Gastrocnemius medialis (tissue), 4 donors: ENCODE measurements at regions of chr1 and their contacts with region 1.

Region 1: DNA sequence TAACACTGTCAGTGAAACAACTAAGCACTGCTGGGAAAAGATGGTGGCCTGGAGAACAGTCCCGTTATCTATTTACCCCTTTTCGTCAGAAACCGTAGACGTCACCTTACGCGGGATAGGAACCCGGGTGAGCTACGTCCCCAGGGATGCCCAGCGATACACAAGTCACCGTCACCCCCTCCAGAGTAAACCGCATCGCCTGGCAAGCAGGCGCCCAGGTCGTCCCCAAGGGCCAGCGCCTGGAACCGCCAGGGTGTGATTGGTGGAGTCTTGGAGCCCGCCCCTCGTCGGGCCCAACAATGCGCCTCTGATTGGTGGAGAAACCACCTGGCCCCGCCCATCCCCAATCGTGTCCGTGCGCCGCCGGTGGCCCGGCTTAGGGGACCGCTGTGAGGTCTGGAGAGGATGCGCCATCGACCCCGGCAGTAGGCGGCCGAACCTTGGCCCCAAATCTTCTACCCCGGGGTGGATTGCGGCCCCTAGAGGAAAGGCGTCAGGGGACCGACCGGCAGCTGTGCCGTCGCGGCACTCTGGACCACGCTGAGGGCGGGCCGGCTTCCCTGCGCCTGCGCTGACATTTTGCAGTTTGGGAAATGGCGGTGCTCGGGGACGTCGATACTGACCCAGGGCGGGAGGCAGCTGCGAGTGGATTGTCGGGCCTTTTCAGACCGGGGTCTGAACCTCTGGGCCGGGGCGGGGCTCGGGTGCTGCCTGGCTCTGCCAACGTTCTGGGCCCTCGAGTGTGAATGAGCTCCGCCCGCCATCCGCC is 34.4 kb downstream of the SLC2A1 start:
- DNase-seq: peak; percentile 76 to 84
- ATAC-seq: peak; percentile 92
- H3K4me3 ChIP-seq: peak overlapping the region; percentile 67 to 83 (median 76)
- H3K27ac ChIP-seq: peak overlapping the region; percentile 75 to 85 (median 77)
- H3K4me1 ChIP-seq: peaks cover 3 to 10% of the 10 kb centered on the region in 2 donors
- H3K27me3 ChIP-seq: peaks cover 4 to 17% (median 10%) of the 10 kb centered on the region in 3 donors
- CTCF ChIP-seq: peak in 1 of 5 experiments; percentile 9
- POLR2A ChIP-seq: peak; percentile 51 to 67

Region 2: DNA sequence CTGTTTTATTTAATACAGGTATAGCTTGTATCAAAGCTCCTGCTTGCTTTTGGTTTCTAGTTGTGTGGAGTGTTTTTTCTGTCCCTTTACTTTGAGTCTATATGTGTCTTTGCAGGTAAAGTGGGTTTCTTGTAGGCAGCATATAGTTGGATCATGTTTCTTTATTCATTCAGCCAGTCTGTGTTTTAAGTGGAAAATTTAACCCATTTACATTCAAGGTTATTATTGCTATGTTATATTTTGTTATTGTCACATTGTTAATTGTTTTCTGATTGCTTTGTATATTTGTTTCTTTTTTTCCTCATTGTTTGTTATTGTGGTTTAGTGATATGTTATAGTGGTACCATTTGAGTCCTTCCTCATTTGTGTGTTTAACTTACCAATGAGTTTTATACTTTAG is 211.0 kb before region 1 on chr1:
- in situ Hi-C with region 1: no loop called
- intact Hi-C with region 1: no loop called
- DNase-seq: no peak
- ATAC-seq: no peak
- H3K4me3 ChIP-seq: no peak overlapping the region
- H3K27ac ChIP-seq: no peak overlapping the region
- H3K4me1 ChIP-seq: no peaks in the 10 kb centered on the region
- H3K27me3 ChIP-seq: no peaks in the 10 kb centered on the region
- CTCF ChIP-seq: no peak
- POLR2A ChIP-seq: no peak

Region 3: GRCh38 chr1:42816585-42817434 is 107.5 kb before region 1 on chr1 and contains the starts of genes ERMAP and SVBP:
- in situ Hi-C with region 1: no loop called
- intact Hi-C with region 1: loop called (anchors 10 kb)
- DNase-seq: peak; percentile 84 to 87
- ATAC-seq: peak; percentile 97
- H3K4me3 ChIP-seq: peak within 1 kb of the TSS; percentile 65 to 95 (median 76)
- H3K27ac ChIP-seq: peak within 1 kb of the TSS; percentile 88 to 100 (median 96)
- H3K4me1 ChIP-seq: peaks cover 2 to 20% of the 10 kb centered on the region in 2 donors
- H3K27me3 ChIP-seq: no peaks in the 10 kb centered on the region
- CTCF ChIP-seq: no peak
- POLR2A ChIP-seq: no peak
- total RNA-seq, gene ERMAP: 1.4 to 6.5 (median 3.9) TPM
- total RNA-seq, gene SVBP: 15.5 to 26.4 (median 24.9) TPM

Region 4: GRCh38 chr1:42958488-42959319 is 34.4 kb after region 1 on chr1 and contains the start of gene SLC2A1:
- in situ Hi-C with region 1: no loop called
- intact Hi-C with region 1: loop called (anchors 2 kb)
- DNase-seq: peak; percentile 61
- ATAC-seq: peak; percentile 66 to 71
- H3K4me3 ChIP-seq: peak within 1 kb of the TSS; percentile 56 to 78 (median 63)
- H3K27ac ChIP-seq: peak within 1 kb of the TSS in 3 of 4 donors; percentile 31 to 55 (median 53)
- H3K4me1 ChIP-seq: peaks cover 5 to 9% of the 10 kb centered on the region in 2 donors
- H3K27me3 ChIP-seq: peaks cover 29 to 45% (median 35%) of the 10 kb centered on the region in 3 donors
- CTCF ChIP-seq: no peak
- POLR2A ChIP-seq: peak; percentile 44 to 62
- total RNA-seq, gene SLC2A1: 6.3 to 16.1 (median 9.4) TPM